HEK293 (cell line): ENCODE measurements at regions of chr1 and their contacts with region 1.

Region 1: DNA sequence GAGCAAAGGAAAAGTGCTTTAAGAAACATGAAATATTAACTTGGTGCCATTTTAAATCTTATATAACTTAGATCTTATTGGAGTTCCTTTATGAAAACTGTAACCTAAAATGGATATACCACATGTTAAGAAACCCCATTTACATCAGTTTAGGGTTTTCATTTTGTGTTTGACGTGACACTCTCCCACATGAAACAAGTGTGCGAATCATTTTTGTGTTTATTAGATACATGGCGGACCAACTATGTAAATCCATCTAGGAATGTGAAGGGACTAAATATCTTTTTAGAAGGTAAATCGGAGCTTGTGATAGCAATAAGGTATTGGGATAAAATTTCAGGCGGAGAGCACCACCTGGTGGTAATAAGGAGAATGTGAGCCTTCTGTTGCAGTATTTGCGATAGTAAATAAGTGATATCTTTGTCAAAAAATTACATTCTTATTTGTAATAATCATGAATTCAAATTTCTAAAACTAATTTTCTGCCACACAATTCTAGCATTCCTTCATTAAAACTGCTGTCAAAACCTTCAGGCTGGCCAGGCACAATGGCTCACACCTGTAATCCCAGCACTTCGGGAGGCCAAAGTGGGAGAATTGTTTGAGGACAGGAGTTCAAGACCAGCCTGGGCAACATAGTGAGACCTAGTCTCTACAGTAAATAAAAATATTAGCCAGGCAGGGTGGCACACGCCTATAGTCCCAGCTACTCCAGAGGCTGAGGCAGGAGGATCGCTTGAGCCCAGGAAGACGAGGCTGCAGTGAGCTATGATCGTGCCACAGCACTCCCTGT is 31.3 kb downstream of the SMAP2 start:
- H3K4me3 ChIP-seq: no peak overlapping the region
- H3K27ac ChIP-seq: no peak overlapping the region
- H3K4me1 ChIP-seq: peaks cover 6% of the 10 kb centered on the region; the same call in 1 of the 2 replicates
- CTCF ChIP-seq: peak; percentile 63; the same call in 1 of the 2 replicates

Region 2: DNA sequence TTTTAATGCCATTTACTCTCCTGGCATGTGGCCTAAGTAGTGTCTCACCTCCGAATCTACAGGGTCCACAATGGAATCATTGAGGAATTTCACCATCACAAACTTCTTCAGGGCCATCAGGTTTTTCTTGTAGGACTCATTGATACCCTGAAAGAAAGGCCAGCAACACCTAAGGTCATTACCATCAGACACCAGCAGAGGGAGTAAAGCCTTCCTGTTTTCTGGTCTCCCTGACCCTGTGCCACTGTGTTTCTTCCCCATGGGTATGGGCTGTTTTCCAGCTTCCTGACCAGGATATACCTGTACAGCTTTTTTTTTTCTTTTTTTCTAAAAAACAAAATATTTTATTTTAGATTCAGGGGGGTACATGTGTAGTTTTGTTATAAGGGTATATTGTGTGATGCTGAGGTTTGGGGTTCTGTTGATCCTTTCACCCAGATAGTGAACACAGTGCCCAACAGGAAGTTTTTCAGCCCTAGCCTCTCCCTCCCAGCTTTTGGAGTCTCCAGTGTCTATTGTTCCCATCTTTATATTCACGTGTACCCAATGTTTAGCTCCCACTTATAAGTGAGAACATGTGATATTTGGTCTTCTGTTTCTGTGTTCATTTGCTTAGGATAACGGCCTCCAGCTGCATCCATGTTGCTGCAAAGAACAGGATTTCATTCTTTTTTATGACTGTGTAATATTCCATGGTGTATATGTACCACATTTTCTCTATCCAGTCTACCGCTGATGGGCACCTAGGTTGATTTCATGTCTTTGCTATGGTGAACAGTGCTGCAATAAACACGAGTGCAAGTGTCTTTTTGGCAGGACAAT is 326.1 kb before region 1 on chr1:
- CTCF ChIA-PET with region 1: interaction called, 12 read pairs
- POLR2A ChIA-PET with region 1: no interaction called
- H3K4me3 ChIP-seq: no peak overlapping the region
- H3K27ac ChIP-seq: no peak overlapping the region
- H3K4me1 ChIP-seq: no peaks in the 10 kb centered on the region
- CTCF ChIP-seq: peak; percentile 17; the same call in 1 of the 2 replicates

Region 3: DNA sequence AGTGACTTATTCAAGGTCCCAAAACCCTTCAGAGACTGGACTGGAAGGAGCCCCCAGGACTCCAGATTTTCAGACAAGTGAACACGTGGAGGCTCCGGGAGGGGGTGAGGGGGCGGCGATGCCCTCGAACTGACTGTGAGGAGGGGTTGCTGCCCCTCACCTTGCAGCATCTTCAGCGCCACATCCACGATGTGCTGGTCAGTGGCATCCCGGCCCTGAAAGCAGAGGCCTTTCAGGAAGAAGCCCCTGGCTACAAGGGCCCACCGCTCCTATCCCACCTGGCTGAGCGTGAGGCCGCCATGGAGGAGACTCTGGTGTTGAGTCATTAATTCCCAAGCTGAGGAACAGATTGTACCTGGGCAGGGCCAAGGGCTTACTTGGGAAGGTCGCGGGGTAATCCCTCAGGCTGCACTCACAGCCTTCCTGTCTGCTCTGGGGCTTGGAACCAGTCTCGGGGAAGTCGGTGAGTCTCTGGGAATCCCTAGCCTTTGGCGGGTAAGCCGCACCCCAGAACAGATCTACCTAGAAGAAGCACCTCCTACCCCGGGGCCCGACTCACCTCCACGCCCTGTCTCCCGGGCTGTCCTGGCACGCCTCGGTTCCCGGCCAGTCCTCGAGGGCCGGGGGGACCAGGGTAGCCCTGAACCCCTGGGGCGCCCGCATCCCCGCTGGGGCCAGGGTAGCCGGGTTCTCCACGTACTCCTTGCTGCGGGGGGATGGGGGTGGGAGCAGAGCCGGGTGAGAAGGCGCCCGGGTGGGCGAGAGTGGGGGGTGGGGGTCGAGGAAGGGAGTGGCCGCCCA is 101.7 kb before region 1 on chr1:
- CTCF ChIA-PET with region 1: no interaction called
- POLR2A ChIA-PET with region 1: no interaction called
- H3K4me3 ChIP-seq: no peak overlapping the region
- H3K27ac ChIP-seq: no peak overlapping the region
- H3K4me1 ChIP-seq: no peaks in the 10 kb centered on the region
- CTCF ChIP-seq: no peak

Region 4: DNA sequence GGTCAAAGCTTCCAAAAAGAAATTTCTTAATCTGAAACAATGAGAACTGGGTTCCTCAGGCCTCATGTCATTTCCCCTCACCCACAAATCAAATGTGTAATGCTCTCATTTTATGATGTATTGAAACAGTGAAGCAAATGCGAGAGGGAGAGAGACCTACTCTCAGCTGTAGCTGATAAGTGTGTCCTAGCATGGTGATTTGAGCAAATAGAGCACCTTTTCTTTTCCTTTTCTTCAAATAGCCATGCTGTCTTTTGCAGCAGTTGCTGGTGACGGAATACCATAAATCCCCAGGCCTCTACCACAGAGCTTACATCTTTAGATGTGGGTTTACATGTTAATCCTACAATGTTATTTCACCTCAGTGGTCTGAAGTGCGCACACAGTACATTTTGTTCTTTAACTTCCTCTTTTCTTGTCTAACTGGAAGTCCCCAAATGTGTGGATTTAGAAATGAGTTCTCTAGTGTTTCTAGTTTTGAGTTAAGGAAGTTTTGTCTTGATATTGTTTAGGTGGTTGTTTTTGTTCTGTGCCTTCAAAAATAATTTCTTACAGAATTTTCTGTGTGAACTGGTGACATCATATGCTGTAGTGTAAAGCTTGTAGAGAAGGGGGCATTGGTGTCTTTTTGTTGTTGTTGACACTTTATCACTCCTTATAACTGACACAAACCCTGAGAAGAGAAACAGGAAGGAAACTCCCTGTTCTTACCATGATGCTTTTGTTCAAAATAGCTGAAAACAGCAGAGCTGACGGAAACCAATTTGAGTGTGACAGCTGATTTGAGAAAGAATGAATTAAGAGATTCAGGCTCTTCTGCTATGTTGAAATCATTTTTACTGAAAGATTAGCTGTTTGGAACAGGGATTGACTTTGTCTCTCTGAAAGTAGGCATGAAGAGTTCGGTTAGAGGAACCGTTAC is 19.2 kb before region 1 on chr1:
- CTCF ChIA-PET with region 1: interaction called, 26 read pairs
- POLR2A ChIA-PET with region 1: no interaction called
- H3K4me3 ChIP-seq: no peak overlapping the region
- H3K27ac ChIP-seq: no peak overlapping the region
- H3K4me1 ChIP-seq: peaks cover 14% of the 10 kb centered on the region; the same call in 1 of the 2 replicates
- CTCF ChIP-seq: no peak

Region 5: GRCh38 chr1:40610156-40610555 is 205.3 kb after region 1 on chr1:
- CTCF ChIA-PET with region 1: no interaction called
- POLR2A ChIA-PET with region 1: no interaction called
- H3K4me3 ChIP-seq: no peak overlapping the region
- H3K27ac ChIP-seq: no peak overlapping the region
- H3K4me1 ChIP-seq: no peaks in the 10 kb centered on the region
- CTCF ChIP-seq: no peak